ENCODE measurements at regions of chr1 and their contacts with region 1.

Region 1: GRCh38 chr1:10484521-10484920 is 9.8 kb downstream of the PEX14 start:
- DNase-seq: no peak
- ATAC-seq: no peak
- H3K4me3 ChIP-seq: no peak overlapping the region
- H3K27ac ChIP-seq: no peak overlapping the region
- H3K4me1 ChIP-seq: no peaks in the 10 kb centered on the region; the same call in 1 of the 2 replicates
- H3K27me3 ChIP-seq: no peaks in the 10 kb centered on the region
- CTCF ChIP-seq: no peak
- POLR2A ChIP-seq: no peak
- RAD21 ChIP-seq: no peak

Region 2: GRCh38 chr1:10472220-10473144 is 12.0 kb before region 1 on chr1 and contains the start of gene DFFA:
- CTCF ChIA-PET with region 1: no interaction called
- POLR2A ChIA-PET with region 1: interaction called, 14 read pairs
- dilution Hi-C with region 1: no loop called
- in situ Hi-C with region 1: no loop called
- intact Hi-C with region 1: no loop called
- DNase-seq: peak; percentile 96
- ATAC-seq: peak; percentile 84
- H3K4me3 ChIP-seq: peak within 1 kb of the TSS; percentile 78
- H3K27ac ChIP-seq: peak within 1 kb of the TSS; percentile 41
- H3K4me1 ChIP-seq: no peaks in the 10 kb centered on the region; the same call in 1 of the 2 replicates
- H3K27me3 ChIP-seq: no peaks in the 10 kb centered on the region
- CTCF ChIP-seq: no peak
- POLR2A ChIP-seq: no peak
- RAD21 ChIP-seq: no peak
- total RNA-seq, gene DFFA: 56.1 and 62.6 TPM in 2 replicates

Measured in IMR-90 (cell line).